ENCODE measurements at regions of chr17 and their contacts with region 1.

Region 1: DNA sequence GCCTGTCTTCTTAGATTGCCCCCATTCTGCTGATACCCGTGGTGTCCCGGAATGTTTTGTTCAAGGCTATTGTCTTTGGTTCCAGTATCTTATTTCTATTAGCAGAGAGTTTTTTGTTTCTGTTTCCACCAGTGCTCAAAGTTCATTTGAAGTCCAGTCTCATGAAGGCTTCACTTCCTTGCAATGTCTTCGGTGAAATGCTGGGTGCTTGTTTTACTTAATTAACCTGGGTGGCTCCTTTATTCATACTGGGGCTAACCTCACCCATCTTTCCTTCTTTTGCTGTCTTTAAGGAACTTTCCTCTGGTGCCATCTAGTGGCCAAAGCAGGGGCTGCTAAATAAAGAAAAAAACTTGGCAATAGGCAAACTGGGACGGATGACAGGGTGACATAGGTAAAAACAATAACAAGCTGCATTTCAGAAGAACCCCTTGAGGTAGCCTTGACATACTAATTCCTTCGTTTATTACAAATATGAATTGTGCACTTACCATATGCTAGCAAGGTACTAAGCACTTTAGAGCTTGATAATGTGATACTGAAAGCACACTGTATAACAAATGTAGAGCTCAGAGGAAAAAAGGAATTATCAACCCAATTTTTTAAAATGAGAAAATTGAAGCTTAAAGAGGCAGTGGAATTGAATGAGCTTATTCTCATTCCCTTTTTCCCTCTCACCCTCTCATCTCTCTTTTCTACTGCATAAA is 2.8 kb upstream of the SMIM36 start:
- DNase-seq: peak in 5 of 6 donors; percentile 34 to 72 (median 62)
- ATAC-seq: peak; percentile 61 to 93 (median 84)
- H3K4me3 ChIP-seq: no peak overlapping the region
- H3K27ac ChIP-seq: no peak overlapping the region
- H3K4me1 ChIP-seq: no peaks in the 10 kb centered on the region
- H3K27me3 ChIP-seq: peaks cover 0 to 4% (median 0%) of the 10 kb centered on the region in 4 donors
- CTCF ChIP-seq: peak; percentile 75 to 92 (median 86)

Region 2: GRCh38 chr17:55090079-55090492 is 424.0 kb before region 1 on chr17:
- intact Hi-C with region 1: no loop called
- DNase-seq: no peak
- ATAC-seq: no peak
- H3K4me3 ChIP-seq: no peak overlapping the region
- H3K27ac ChIP-seq: no peak overlapping the region
- H3K4me1 ChIP-seq: no peaks in the 10 kb centered on the region
- H3K27me3 ChIP-seq: no peaks in the 10 kb centered on the region
- CTCF ChIP-seq: no peak

Region 3: GRCh38 chr17:55356434-55357328 is 157.4 kb before region 1 on chr17:
- intact Hi-C with region 1: loop called in 1 of 3 experiments (anchors 5 kb)
- DNase-seq: peak in 5 of 6 donors; percentile 25 to 62 (median 48)
- ATAC-seq: peak; percentile 46 to 89 (median 86)
- H3K4me3 ChIP-seq: no peak overlapping the region
- H3K27ac ChIP-seq: no peak overlapping the region
- H3K4me1 ChIP-seq: no peaks in the 10 kb centered on the region
- H3K27me3 ChIP-seq: no peaks in the 10 kb centered on the region
- CTCF ChIP-seq: peak; percentile 56 to 70 (median 70)

Region 4: GRCh38 chr17:56629531-56630075 is 1115.6 kb after region 1 on chr17:
- intact Hi-C with region 1: no loop called
- DNase-seq: no peak
- ATAC-seq: peak in 1 of 4 donors; percentile 38
- H3K4me3 ChIP-seq: no peak overlapping the region
- H3K27ac ChIP-seq: no peak overlapping the region
- H3K4me1 ChIP-seq: no peaks in the 10 kb centered on the region
- H3K27me3 ChIP-seq: no peaks in the 10 kb centered on the region
- CTCF ChIP-seq: no peak

Measured in pancreas (tissue), 10 donors.